Right lobe of liver (tissue), 6 donors: ENCODE measurements at regions of chr6 and their contacts with region 1.

Region 1: GRCh38 chr6:3438190-3439167 is 18.4 kb downstream of the SLC22A23 start:
- DNase-seq: no peak
- ATAC-seq: peak in 1 of 4 donors; percentile 34
- H3K4me3 ChIP-seq: no peak overlapping the region
- H3K27ac ChIP-seq: no peak overlapping the region
- H3K4me1 ChIP-seq: no peaks in the 10 kb centered on the region
- H3K27me3 ChIP-seq: no peaks in the 10 kb centered on the region
- CTCF ChIP-seq: no peak
- POLR2A ChIP-seq: no peak

Region 2: GRCh38 chr6:3489027-3489757 is 50.7 kb after region 1 on chr6:
- intact Hi-C with region 1: no loop called
- DNase-seq: no peak
- ATAC-seq: no peak
- H3K4me3 ChIP-seq: no peak overlapping the region
- H3K27ac ChIP-seq: no peak overlapping the region
- H3K4me1 ChIP-seq: no peaks in the 10 kb centered on the region
- H3K27me3 ChIP-seq: no peaks in the 10 kb centered on the region
- CTCF ChIP-seq: no peak
- POLR2A ChIP-seq: no peak

Region 3: GRCh38 chr6:3732345-3733141 is 294.1 kb after region 1 on chr6:
- intact Hi-C with region 1: loop called in 1 of 2 experiments (anchors 10 kb)
- DNase-seq: peak; percentile 80 to 81 (median 81)
- ATAC-seq: peak; percentile 87 to 91 (median 90)
- H3K4me3 ChIP-seq: no peak overlapping the region
- H3K27ac ChIP-seq: no peak overlapping the region
- H3K4me1 ChIP-seq: peaks cover 0 to 13% (median 0%) of the 10 kb centered on the region in 4 donors
- H3K27me3 ChIP-seq: no peaks in the 10 kb centered on the region
- CTCF ChIP-seq: peak; percentile 76 to 94 (median 87)
- POLR2A ChIP-seq: no peak